T-cell (primary cell): ENCODE measurements at regions of chr12 and their contacts with region 1.

Region 1: GRCh38 chr12:57323416-57323815 is 72.4 kb upstream of the STAC3 start:
- DNase-seq: no peak
- ATAC-seq: no peak
- H3K4me3 ChIP-seq: no peak overlapping the region
- H3K4me3 Mint-ChIP-seq: no peak overlapping the region
- H3K27ac ChIP-seq: no peak overlapping the region
- H3K27ac Mint-ChIP-seq: no peak overlapping the region
- H3K4me1 ChIP-seq: no peaks in the 10 kb centered on the region
- H3K4me1 Mint-ChIP-seq: peaks cover 0 to 11% (median 5%) of the 10 kb centered on the region in 3 donors
- H3K27me3 ChIP-seq: no peaks in the 10 kb centered on the region
- H3K27me3 Mint-ChIP-seq: no peaks in the 10 kb centered on the region

Region 2: GRCh38 chr12:57268264-57268663 is 55.2 kb before region 1 on chr12:
- CTCF ChIA-PET with region 1: interaction called in 1 of 2 experiments, 10 read pairs
- POLR2A ChIA-PET with region 1: no interaction called
- DNase-seq: no peak
- ATAC-seq: no peak
- H3K4me3 ChIP-seq: no peak overlapping the region
- H3K4me3 Mint-ChIP-seq: no peak overlapping the region
- H3K27ac ChIP-seq: no peak overlapping the region
- H3K27ac Mint-ChIP-seq: peak overlapping the region in 1 of 2 donors; percentile 2
- H3K4me1 ChIP-seq: peaks cover 0 to 5% of the 10 kb centered on the region in 2 experiments
- H3K4me1 Mint-ChIP-seq: no peaks in the 10 kb centered on the region
- H3K27me3 ChIP-seq: no peaks in the 10 kb centered on the region
- H3K27me3 Mint-ChIP-seq: no peaks in the 10 kb centered on the region

Region 3: GRCh38 chr12:57552835-57553313 is 229.5 kb after region 1 on chr12:
- CTCF ChIA-PET with region 1: no interaction called
- POLR2A ChIA-PET with region 1: no interaction called
- DNase-seq: no peak
- ATAC-seq: no peak
- H3K4me3 ChIP-seq: no peak overlapping the region
- H3K4me3 Mint-ChIP-seq: no peak overlapping the region
- H3K27ac ChIP-seq: no peak overlapping the region
- H3K27ac Mint-ChIP-seq: no peak overlapping the region
- H3K4me1 ChIP-seq: peaks cover 2 to 12% of the 10 kb centered on the region in 2 experiments
- H3K4me1 Mint-ChIP-seq: peaks cover 11 to 15% (median 12%) of the 10 kb centered on the region in 3 donors
- H3K27me3 ChIP-seq: peaks cover 15 to 20% of the 10 kb centered on the region in 2 experiments
- H3K27me3 Mint-ChIP-seq: peaks cover 0 to 9% of the 10 kb centered on the region in 2 donors